ENCODE measurements at regions of chr9 and their contacts with region 1.

Region 1: GRCh38 chr9:137046098-137046787 is at the start of gene NPDC1:
- DNase-seq: peak; percentile 68
- ATAC-seq: peak; percentile 73
- H3K4me3 ChIP-seq: peak within 1 kb of the TSS; percentile 55 to 90
- H3K27ac ChIP-seq: peak within 1 kb of the TSS; percentile 77
- H3K4me1 ChIP-seq: peaks cover 12 to 26% of the 10 kb centered on the region in 2 experiments
- H3K27me3 ChIP-seq: no peaks in the 10 kb centered on the region
- CTCF ChIP-seq: peak in 2 of 3 experiments; percentile 82 to 86; a peak in 4 of 6 replicates
- POLR2A ChIP-seq: no peak
- RAD21 ChIP-seq: no peak
- total RNA-seq, gene NPDC1: 98.8 TPM

Region 2: GRCh38 chr9:136926137-136926704 is 120.0 kb before region 1 on chr9:
- CTCF ChIA-PET with region 1: no interaction called
- POLR2A ChIA-PET with region 1: no interaction called
- RAD21 ChIA-PET with region 1: no interaction called
- intact Hi-C with region 1: no loop called
- DNase-seq: no peak
- ATAC-seq: peak; percentile 62
- H3K4me3 ChIP-seq: no peak overlapping the region
- H3K27ac ChIP-seq: no peak overlapping the region
- H3K4me1 ChIP-seq: no peaks in the 10 kb centered on the region
- H3K27me3 ChIP-seq: no peaks in the 10 kb centered on the region
- CTCF ChIP-seq: peak in 1 of 3 experiments; percentile 14; a peak in 1 of 6 replicates
- POLR2A ChIP-seq: no peak
- RAD21 ChIP-seq: no peak

Region 3: DNA sequence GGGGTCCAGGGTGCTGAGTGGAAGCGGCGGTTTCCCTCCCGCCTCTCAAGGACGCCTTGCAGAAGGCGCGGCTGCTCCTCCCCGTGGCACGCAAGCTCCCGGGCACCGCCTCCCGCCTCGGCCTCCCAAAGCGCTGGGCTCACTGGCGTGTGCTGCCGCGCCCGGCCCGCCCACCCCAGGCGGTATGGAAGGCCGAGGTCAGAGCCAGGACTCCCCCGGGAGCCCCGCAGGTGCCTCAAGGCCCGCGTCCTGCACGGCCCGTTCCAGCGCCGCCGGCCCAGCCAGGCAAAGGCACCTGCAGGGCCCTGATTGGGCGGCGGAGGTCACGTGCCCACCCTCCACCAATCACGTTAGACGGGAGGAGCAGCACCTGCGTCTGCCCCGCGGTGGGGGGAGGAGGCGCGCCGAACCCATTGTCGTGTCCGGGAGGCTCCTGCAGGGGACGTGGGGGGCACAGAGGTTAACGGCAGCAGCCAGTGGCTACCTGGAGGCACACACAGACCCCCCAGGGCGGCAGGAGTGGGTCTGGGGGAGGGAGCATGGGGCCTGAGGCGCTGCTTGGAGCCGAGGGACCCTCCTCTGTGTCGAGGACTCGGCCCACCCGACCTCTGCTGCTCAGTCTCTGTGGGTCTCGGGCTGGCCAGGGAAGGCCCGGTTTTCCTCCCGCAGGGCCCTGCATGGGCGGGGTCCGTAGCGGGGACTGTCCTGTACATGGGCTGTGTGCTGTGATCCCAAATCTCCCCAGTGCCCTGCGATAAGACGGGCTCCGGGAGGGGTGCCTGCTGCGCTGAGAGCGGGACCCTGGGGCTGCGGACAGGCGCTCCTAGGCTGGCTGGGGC is 96.2 kb before region 1 on chr9:
- CTCF ChIA-PET with region 1: interaction called, 15 read pairs
- POLR2A ChIA-PET with region 1: no interaction called
- RAD21 ChIA-PET with region 1: interaction called in 1 of 2 experiments, 3 read pairs
- intact Hi-C with region 1: no loop called
- DNase-seq: peak; percentile 85
- ATAC-seq: peak; percentile 87
- H3K4me3 ChIP-seq: peak overlapping the region; percentile 65 to 67
- H3K27ac ChIP-seq: peak overlapping the region; percentile 94
- H3K4me1 ChIP-seq: peaks cover 22 to 43% of the 10 kb centered on the region in 2 experiments
- H3K27me3 ChIP-seq: no peaks in the 10 kb centered on the region
- CTCF ChIP-seq: peak in 2 of 3 experiments; percentile 12 to 22; a peak in 2 of 6 replicates
- POLR2A ChIP-seq: peak; percentile 60
- RAD21 ChIP-seq: no peak

Region 4: DNA sequence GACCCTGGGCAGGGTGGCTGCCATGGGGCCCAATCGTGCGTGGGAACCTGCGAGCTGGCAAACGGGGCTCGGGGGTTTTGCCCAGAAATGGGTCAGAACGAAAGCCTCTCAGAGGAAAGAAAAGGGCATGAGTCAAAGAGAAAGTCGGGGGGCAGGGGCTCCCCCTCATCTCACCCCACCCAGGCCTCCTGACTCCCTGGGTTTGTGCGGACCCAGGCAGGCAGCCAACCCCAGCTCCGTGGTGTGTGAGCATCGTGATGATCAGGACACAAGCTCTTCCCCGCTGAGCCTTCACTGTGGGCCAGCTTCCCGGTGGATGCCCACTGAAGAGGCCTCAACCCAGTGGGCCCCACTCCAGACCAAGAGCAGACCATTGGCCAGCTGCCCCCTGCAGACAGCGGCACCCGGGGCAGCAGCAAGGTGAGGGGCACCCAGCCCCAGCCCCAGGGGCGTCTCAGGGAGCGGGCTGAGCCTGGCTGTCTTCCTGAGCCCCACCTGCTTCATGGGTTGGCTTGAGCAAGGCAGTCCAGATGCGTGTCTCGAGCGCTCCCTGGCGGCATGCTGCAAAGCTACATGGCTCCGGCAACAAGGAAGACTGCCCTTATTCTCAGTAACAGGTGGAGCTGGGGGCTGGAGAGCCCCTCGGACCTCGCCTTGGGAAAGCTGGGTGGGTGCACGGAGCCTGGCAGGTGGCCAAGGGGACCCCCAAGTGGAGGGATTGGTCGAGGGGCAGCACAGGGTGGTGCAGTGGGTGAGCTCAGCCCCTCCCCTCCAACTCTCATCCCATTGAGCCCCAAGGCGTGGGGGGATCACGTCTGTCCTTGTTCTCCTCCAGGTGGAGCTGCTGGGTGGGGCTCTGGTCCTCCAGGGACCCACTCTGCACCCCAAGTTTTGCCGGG is 11.1 kb before region 1 on chr9:
- CTCF ChIA-PET with region 1: interaction called, 27 read pairs
- POLR2A ChIA-PET with region 1: no interaction called
- RAD21 ChIA-PET with region 1: interaction called, 4 to 5 read pairs
- intact Hi-C with region 1: no loop called
- DNase-seq: peak; percentile 69
- ATAC-seq: peak; percentile 95
- H3K4me3 ChIP-seq: peak overlapping the region in 1 of 2 experiments; percentile 22; a peak in 1 of 4 replicates
- H3K27ac ChIP-seq: no peak overlapping the region; the same call in 1 of the 2 replicates
- H3K4me1 ChIP-seq: peaks cover 9 to 20% of the 10 kb centered on the region in 2 experiments; a peak in 3 of 4 replicates
- H3K27me3 ChIP-seq: no peaks in the 10 kb centered on the region
- CTCF ChIP-seq: peak in 2 of 3 experiments; percentile 85 to 96; a peak in 4 of 6 replicates
- POLR2A ChIP-seq: no peak
- RAD21 ChIP-seq: no peak

Region 5: DNA sequence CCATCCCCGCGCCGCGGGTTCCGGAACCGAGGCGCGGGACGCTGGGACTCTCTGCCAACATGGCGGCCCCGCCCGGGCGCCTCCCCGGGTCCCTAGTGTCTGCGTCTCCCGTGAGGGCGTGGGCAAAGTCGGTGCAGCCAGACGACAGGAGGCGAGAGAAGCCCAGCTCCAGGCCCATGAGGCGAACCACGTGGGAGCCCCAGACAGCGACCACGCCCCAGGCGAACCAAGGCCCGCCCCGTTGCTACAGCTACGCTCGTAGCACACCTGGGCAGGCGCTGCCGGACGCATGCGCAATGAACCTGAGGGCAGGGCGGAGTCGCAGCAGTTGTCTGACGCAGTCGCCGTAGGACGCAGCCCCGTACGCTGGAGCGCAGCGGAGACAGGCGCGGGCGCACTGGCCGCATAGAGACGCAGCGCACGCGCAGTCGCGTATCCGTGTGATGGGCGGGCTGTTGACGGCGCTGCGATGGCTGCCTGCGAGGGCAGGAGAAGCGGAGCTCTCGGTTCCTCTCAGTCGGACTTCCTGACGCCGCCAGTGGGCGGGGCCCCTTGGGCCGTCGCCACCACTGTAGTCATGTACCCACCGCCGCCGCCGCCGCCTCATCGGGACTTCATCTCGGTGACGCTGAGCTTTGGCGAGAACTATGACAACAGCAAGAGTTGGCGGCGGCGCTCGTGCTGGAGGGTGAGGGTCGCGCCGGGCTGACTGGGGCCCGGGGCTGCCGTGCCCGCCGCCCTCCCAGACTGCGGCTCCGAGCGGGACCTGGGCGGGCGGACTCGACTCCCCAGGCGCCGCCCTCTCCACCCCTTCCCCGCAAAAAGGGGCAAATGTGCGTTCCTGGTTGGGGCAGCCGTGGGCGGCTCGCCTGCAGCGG is 40.5 kb after region 1 on chr9 and contains the start of gene MAN1B1:
- CTCF ChIA-PET with region 1: interaction called, 10 read pairs
- POLR2A ChIA-PET with region 1: no interaction called
- RAD21 ChIA-PET with region 1: no interaction called
- intact Hi-C with region 1: no loop called
- DNase-seq: peak; percentile 98
- ATAC-seq: peak; percentile 83
- H3K4me3 ChIP-seq: peak within 1 kb of the TSS; percentile 83 to 96
- H3K27ac ChIP-seq: peak within 1 kb of the TSS; percentile 98
- H3K4me1 ChIP-seq: peaks cover 38 to 56% of the 10 kb centered on the region in 2 experiments
- H3K27me3 ChIP-seq: no peaks in the 10 kb centered on the region
- CTCF ChIP-seq: no peak
- POLR2A ChIP-seq: no peak
- RAD21 ChIP-seq: no peak
- total RNA-seq, gene MAN1B1: 50.9 TPM